PC-9 (cell line): ENCODE measurements at regions of chr3 and their contacts with region 1.

Region 1: DNA sequence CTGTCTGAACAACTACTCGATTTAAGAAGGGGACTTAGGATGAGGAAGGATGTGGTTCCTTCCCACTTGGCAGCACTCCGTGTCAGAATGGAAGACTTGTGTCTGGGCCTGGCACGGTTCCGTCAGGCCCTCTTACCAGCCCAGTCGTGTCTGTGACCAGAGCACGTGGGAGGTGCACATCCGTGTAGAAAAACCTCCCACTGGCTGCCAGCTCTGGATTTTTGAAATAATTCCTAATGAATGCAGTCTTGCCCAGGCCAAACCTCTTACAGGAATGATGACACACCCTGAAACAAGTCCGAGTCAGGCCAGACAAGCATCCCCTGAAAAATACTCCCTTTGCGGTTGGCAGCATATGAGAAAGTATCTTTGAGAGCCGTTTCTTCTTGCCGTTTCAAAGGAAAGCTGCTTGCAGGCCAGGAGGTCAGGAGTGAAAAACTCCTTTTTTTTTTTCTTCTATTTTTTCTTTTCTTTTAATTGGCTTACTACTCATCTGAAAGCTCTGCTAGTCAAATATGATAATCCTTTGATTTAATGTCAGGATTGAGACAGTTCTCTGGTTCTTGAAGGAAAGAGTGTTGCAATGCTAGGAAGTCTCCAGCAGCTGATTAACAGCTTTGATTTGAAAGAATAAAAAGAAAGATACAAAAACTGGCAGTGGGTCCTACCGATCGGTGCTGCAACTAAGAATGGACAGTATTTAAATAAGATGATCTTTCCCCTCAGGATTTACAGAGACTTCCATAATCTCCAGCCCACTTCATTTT is 19.8 kb downstream of the IL1RAP start:
- DNase-seq: peak in 1 of 2 experiments; percentile 79
- H3K4me3 ChIP-seq: no peak overlapping the region
- H3K27ac ChIP-seq: no peak overlapping the region
- H3K4me1 ChIP-seq: no peaks in the 10 kb centered on the region
- H3K27me3 ChIP-seq: no peaks in the 10 kb centered on the region
- CTCF ChIP-seq: no peak

Region 2: GRCh38 chr3:190504354-190505125 is 29.2 kb before region 1 on chr3:
- CTCF ChIA-PET with region 1: no interaction called
- POLR2A ChIA-PET with region 1: no interaction called
- intact Hi-C with region 1: no loop called
- DNase-seq: no peak
- H3K4me3 ChIP-seq: no peak overlapping the region
- H3K27ac ChIP-seq: no peak overlapping the region
- H3K4me1 ChIP-seq: no peaks in the 10 kb centered on the region
- H3K27me3 ChIP-seq: no peaks in the 10 kb centered on the region
- CTCF ChIP-seq: 0 out of 2 replicates have a peak, but pooled peaks have one; percentile 25

Region 3: GRCh38 chr3:190566043-190566933 is 32.6 kb after region 1 on chr3:
- CTCF ChIA-PET with region 1: interaction called, 4 read pairs
- POLR2A ChIA-PET with region 1: interaction called, 4 read pairs
- intact Hi-C with region 1: loop called (anchors 1 kb)
- DNase-seq: peak; percentile 94 to 100
- H3K4me3 ChIP-seq: no peak overlapping the region
- H3K27ac ChIP-seq: peak overlapping the region; percentile 82
- H3K4me1 ChIP-seq: peaks cover 33% of the 10 kb centered on the region
- H3K27me3 ChIP-seq: no peaks in the 10 kb centered on the region
- CTCF ChIP-seq: no peak

Region 4: DNA sequence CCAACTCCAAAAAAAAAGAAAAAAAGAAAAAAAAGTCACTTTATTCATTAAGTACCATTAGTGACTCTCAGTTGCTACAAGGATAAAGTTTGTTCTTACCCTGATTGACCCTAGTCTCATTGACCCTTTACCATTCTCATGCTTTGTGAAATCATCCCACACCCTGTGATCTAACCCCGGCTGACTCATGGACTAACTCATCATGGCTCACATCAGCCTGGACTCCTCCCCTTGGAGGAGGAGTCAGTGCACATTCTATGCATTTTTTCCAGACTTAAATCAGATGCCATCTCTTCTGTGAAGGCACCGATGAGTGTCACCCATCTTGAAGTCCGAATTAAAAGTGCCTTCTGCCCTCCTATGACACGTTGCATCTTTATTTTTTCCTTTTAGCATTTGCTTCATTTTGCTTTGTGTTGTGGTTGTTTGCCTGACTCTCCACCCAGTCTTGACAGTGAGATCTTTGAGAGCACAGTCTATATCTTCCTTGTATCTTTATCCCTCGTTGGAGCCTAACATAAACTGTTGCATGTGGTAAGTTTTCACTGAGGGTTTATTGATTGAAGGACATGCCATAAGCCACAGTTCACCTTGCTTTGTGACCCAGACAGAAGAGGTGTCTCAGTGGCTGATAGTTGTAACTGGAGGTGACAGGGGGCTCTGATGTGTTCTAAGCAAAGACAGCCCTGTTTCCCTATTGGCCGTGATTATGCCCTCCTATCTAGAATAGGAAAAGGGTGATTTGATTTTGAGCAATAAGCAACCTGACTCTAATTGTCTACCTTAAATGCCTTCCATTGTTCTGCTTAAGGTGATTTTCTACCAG is 52.3 kb after region 1 on chr3:
- CTCF ChIA-PET with region 1: no interaction called
- POLR2A ChIA-PET with region 1: interaction called, 4 read pairs
- intact Hi-C with region 1: loop called (anchors 1 kb)
- DNase-seq: peak; percentile 80 to 86
- H3K4me3 ChIP-seq: no peak overlapping the region
- H3K27ac ChIP-seq: peak overlapping the region; percentile 57
- H3K4me1 ChIP-seq: peaks cover 22% of the 10 kb centered on the region
- H3K27me3 ChIP-seq: no peaks in the 10 kb centered on the region
- CTCF ChIP-seq: no peak